AG04449 (cell line): ENCODE measurements at regions of chr18 and their contacts with region 1.

Region 1: GRCh38 chr18:49795612-49796552 is 17.5 kb downstream of the ACAA2 start:
- DNase-seq: no peak
- H3K4me3 ChIP-seq: no peak overlapping the region
- CTCF ChIP-seq: no peak

Region 2: GRCh38 chr18:49784427-49785185 is 11.3 kb before region 1 on chr18:
- CTCF ChIA-PET with region 1: interaction called, 33 read pairs
- POLR2A ChIA-PET with region 1: no interaction called
- DNase-seq: no peak
- H3K4me3 ChIP-seq: no peak overlapping the region
- CTCF ChIP-seq: no peak